Calu3 (cell line): ENCODE measurements at regions of chr17 and their contacts with region 1.

Region 1: DNA sequence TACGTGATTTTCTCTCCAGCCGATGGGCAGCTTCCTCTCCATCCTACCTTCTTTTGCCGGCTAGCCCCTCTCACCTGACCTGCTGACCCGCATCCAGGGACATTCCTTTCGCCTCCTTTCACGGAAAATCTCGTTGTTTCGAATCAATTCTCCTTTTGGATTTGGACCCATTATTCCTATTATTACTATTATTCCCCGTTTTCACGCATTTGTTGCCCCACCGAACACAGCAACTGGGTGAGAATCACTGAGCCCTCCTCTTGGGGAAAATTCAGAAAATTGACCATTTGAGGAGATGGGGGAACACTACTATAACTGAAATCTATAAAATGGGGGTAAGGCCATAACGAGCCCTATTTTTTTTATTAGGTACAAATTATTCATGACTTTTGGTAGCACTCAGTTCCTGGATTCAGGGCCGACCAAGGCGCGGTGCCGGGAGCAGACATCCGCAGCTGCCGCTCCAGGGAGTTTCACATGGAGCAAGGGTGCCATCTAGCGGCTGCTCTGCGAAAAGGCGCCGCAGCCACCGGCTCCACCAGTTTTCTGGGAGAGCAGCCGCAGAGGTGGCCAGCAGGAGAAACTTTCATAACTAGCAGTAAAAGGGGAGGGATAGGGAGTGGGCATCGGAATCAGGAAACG is 3.3 kb upstream of the HOXB8 start:
- DNase-seq: peak; percentile 98
- H3K4me3 Mint-ChIP-seq: peak overlapping the region; percentile 88
- H3K27ac Mint-ChIP-seq: peak overlapping the region; percentile 74
- H3K4me1 Mint-ChIP-seq: peaks cover 71% of the 10 kb centered on the region
- H3K27me3 Mint-ChIP-seq: peaks cover 88% of the 10 kb centered on the region
- CTCF ChIP-seq: peak; percentile 100

Region 2: DNA sequence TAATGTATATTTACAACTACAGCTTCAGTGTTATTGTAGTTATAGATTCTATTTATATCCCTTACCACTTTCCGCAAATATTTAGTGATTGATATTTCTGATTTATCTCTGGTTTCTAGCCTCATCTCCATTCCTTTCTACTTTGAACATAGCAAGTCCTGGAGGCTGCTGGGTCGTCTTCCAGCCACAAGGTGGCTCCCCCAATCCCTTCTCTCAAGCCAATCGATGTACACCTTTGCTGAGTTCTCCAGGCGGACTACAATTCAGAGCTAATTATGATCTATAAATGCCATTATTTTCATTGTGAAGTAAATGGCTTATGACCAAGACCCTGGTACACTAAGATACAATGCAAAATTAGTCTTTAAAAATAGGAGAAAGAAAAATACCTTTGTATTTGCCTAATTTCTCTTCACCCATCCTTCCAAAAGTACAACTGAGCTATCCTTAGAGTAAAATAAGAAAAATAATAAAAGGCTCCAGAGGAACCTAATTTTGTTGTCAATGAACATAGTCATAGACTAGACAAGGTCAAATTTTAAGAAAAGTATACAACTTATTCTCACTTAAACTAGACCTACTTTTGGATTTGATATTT is 310.5 kb before region 1 on chr17:
- CTCF ChIA-PET with region 1: interaction called, 8 read pairs
- intact Hi-C with region 1: loop called (anchors 5 kb)
- DNase-seq: peak; percentile 79
- H3K4me3 Mint-ChIP-seq: no peak overlapping the region
- H3K27ac Mint-ChIP-seq: no peak overlapping the region
- H3K4me1 Mint-ChIP-seq: peaks cover 30% of the 10 kb centered on the region
- H3K27me3 Mint-ChIP-seq: no peaks in the 10 kb centered on the region
- CTCF ChIP-seq: peak; percentile 95

Region 3: GRCh38 chr17:48374650-48375230 is 243.6 kb before region 1 on chr17:
- CTCF ChIA-PET with region 1: no interaction called
- intact Hi-C with region 1: no loop called
- DNase-seq: peak; percentile 80
- H3K4me3 Mint-ChIP-seq: no peak overlapping the region
- H3K27ac Mint-ChIP-seq: no peak overlapping the region
- H3K4me1 Mint-ChIP-seq: no peaks in the 10 kb centered on the region
- H3K27me3 Mint-ChIP-seq: no peaks in the 10 kb centered on the region
- CTCF ChIP-seq: peak; percentile 91

Region 4: DNA sequence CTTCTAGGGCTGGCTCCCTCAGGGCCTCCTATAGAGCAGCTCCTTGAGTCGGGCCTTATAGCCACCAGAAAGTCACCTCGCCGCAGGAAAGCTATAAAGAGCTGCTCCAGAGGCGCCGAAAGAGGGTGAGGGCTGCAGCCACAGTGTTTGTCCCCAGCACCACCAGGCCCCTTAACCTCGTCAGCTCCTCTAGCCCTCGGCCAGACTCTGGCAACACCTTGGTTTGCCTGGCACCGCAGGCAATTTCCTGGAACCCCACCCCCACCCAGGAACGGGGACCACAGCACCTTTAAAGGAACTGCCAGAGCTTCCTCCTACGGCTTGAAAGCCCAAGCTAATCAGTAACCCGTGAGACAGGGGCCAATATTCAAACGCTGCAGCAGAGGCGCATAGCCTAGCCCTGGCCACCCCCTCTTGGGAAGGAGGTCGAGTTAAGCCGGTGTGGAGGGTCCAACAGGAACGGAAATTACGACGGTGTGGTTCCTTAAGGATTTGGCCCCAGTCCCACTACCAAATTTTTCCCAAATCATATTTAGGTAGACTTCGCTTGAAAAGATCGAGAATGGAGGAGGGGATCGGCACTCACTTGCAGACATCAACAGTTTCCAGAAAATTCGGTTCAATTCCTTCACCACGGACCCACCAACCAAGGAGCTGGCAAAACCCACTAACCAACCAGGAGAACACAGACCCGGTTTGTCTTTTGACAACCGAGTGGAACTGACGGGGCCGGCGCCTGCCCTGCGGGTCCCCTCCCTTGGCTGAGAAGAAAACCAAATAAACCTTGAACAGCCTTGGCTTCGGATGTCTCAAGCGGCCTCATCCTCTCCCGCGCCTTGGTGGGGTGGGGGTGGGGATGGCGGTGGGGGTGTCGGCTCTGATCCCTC is 16.6 kb before region 1 on chr17:
- CTCF ChIA-PET with region 1: interaction called, 15 read pairs
- intact Hi-C with region 1: loop called (anchors 2 kb)
- DNase-seq: peak; percentile 88
- H3K4me3 Mint-ChIP-seq: peak overlapping the region; percentile 88
- H3K27ac Mint-ChIP-seq: peak overlapping the region; percentile 95
- H3K4me1 Mint-ChIP-seq: peaks cover 45% of the 10 kb centered on the region
- H3K27me3 Mint-ChIP-seq: peaks cover 8% of the 10 kb centered on the region
- CTCF ChIP-seq: no peak

Region 5: DNA sequence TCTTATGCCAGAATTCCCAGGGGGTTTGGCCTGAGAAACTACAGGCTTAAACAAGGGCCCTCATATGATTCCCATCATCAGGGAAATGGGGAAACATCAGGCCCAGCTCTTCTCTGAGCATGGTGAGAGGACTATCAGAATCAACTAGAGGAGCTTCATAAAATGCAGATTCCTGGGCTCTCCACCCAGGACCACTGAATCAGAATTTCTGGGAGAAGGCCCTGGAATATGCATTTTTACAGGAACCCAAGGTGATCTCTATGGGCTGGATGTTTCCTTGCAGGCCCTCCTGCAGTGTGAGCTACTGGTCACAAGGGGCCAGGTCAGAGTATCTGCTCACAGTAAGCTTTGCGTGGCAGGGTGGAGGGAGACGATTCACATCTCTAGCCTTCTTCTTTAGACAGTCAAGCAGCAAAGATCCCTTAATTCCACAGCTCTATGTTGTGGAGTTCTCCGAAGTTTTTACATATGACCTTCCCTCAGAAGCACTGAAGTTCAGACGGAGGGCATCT is 148.9 kb after region 1 on chr17:
- CTCF ChIA-PET with region 1: no interaction called
- intact Hi-C with region 1: no loop called
- DNase-seq: no peak
- H3K4me3 Mint-ChIP-seq: no peak overlapping the region
- H3K27ac Mint-ChIP-seq: no peak overlapping the region
- H3K4me1 Mint-ChIP-seq: no peaks in the 10 kb centered on the region
- H3K27me3 Mint-ChIP-seq: peaks cover 56% of the 10 kb centered on the region
- CTCF ChIP-seq: peak; percentile 15